CD4-positive, alpha-beta memory T cell (primary cell): ENCODE measurements at regions of chr7 and their contacts with region 1.

Region 1: DNA sequence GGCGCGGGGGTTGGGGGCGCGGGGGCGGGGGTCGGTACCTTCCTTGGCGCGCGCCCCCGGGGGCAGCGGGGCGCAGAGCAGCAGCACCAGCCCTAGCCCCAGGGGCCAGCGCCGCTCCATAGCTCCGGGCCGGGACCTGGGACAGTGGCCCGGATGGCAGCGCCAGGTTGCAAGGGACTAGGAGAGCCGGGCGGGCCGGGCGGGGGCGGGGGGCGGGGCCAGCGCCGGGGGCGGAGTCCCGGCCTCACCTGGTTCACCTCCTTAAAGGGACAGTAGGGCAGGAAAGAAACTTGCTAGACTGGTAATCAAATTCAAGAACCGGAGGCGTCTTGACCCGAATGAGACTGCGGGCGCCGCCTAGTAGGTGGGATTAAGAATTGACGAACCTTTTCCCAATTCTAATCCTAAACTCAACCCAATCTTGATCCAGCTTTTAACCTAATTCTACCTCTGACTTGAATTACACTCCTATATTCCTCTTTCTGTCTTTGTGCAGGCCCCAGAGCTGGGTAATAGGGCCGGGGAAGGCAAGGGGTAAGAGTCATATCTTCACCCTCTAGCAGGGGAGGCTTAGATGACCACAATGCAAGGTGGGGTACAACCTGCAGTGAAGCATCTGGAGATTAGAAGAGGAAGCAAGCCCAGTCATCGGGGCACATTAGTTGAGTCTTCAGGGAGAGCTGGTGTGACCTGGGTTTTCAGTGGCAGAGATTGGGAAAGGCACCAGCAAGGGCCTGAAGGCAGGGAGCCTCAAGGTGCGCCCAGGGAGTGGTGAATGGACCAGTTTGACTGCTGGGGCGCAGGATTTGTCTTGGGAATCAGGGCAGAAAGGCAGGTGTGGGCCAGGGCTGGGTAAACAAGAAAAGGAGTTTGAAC is at the start of gene EPHA1:
- DNase-seq: peak; percentile 52 to 62 (median 57)
- H3K4me3 ChIP-seq: peak within 1 kb of the TSS; percentile 58 to 66
- H3K4me3 Mint-ChIP-seq: peak within 1 kb of the TSS; percentile 89 to 97 (median 92)
- H3K27ac ChIP-seq: peak within 1 kb of the TSS; percentile 15
- H3K27ac Mint-ChIP-seq: peak within 1 kb of the TSS; percentile 76 to 96 (median 96)
- H3K4me1 ChIP-seq: peaks cover 48% of the 10 kb centered on the region
- H3K4me1 Mint-ChIP-seq: peaks cover 47 to 73% (median 55%) of the 10 kb centered on the region in 4 donors
- H3K27me3 ChIP-seq: no peaks in the 10 kb centered on the region
- H3K27me3 Mint-ChIP-seq: no peaks in the 10 kb centered on the region
- total RNA-seq, gene EPHA1: 30.7 to 34.4 TPM

Region 2: DNA sequence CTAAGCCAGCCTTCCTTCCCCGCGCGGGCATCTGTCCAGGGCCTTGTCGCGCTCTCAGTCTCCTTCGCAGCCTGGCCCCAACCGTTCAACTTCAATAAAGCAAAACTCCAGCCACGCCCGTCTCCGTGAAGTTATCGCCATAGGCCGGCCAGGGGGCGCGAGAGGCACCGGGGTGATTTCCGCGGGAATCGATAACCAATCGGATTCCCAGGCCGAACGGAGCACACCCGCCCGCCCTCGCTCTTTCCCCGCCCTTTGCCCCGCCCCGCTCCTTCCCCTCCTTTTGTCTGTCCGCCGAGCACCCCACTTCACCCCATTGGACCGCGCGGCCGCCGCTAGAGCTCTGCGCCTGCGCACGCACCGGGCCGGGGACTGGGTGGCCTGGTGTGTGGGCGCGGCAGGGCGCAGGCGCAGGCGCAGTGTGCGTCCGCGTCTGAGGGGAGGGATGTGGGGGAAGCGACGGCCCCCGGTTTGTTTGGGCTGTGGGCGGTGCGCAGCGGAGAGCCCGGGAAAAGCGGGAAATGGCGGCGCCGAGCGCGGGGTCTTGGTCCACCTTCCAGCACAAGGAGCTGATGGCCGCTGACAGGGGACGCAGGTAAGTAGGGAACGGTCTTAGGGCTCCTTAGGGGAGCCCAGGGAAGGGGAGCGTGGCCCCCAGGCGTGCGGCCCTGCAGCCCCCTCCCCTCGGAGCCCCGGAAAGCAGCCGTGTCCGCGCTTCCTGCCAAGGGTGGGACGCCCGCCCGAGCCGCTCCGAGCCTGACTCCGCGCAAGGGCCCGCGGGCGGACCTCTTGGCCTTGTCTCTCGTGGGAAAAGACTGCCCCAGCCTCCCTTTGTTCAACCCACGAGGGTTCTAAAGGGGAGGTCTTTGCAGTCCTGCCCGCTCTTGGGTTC is 120.7 kb before region 1 on chr7 and contains the start of gene CASP2:
- CTCF ChIA-PET with region 1: interaction called, 3 read pairs
- POLR2A ChIA-PET with region 1: interaction called, 13 read pairs
- intact Hi-C with region 1: loop called (anchors 1 kb)
- DNase-seq: peak; percentile 99 to 100 (median 99)
- H3K4me3 ChIP-seq: peak within 1 kb of the TSS; percentile 82 to 92
- H3K4me3 Mint-ChIP-seq: peak within 1 kb of the TSS; percentile 92 to 99 (median 96)
- H3K27ac ChIP-seq: peak within 1 kb of the TSS; percentile 78
- H3K27ac Mint-ChIP-seq: peak within 1 kb of the TSS; percentile 83 to 98 (median 95)
- H3K4me1 ChIP-seq: peaks cover 44% of the 10 kb centered on the region
- H3K4me1 Mint-ChIP-seq: peaks cover 39 to 75% (median 57%) of the 10 kb centered on the region in 4 donors
- H3K27me3 ChIP-seq: no peaks in the 10 kb centered on the region
- H3K27me3 Mint-ChIP-seq: no peaks in the 10 kb centered on the region
- total RNA-seq, gene CASP2: 94.3 to 96.1 TPM

Region 3: GRCh38 chr7:143391462-143392404 is 17.2 kb before region 1 on chr7:
- CTCF ChIA-PET with region 1: interaction called, 6 read pairs
- POLR2A ChIA-PET with region 1: interaction called, 215 read pairs
- intact Hi-C with region 1: no loop called
- DNase-seq: no peak
- H3K4me3 ChIP-seq: no peak overlapping the region
- H3K4me3 Mint-ChIP-seq: no peak overlapping the region
- H3K27ac ChIP-seq: no peak overlapping the region
- H3K27ac Mint-ChIP-seq: no peak overlapping the region
- H3K4me1 ChIP-seq: peaks cover 7% of the 10 kb centered on the region
- H3K4me1 Mint-ChIP-seq: peaks cover 7 to 21% (median 12%) of the 10 kb centered on the region in 4 donors
- H3K27me3 ChIP-seq: no peaks in the 10 kb centered on the region
- H3K27me3 Mint-ChIP-seq: no peaks in the 10 kb centered on the region